Spleen (tissue), 13 donors: ENCODE measurements at regions of chr21 and their contacts with region 1.

Region 1: DNA sequence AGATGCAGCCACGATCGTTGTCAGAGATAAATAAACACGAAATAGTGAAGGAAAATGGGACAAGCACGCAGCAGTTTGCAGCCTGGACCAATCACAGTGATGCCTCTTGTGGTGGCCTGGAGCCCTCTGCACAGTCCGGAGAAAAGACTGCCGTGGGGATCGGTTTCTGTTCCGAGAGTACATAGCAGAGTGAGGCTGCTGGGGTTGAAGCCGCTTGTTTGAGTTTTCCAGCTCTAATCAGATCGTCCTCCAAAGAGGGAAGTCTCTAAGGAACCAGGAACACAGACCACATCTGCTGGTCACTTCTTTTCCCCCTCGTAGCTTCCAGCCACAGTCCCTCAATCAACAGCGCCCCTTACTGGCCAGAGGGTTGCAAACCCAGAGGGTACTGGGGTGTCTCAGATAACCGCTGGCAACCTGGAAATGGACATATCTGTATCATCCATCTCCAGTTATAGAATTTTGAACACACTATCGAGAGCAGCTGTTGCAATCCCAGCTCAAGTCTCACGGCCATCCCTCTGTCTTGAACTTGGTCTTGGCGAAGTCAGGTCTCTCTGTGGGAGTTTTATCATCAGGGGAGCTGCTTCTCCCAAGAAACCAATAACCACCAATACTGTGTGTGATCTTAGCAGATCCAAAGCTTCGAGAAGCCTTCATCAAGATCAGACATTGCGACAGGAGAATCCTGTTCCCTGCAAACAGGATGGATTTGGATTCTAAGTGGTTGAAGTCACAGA is 57.4 kb downstream of the OLIG1 start:
- DNase-seq: peak; percentile 84
- H3K4me3 ChIP-seq: peak overlapping the region in 2 of 8 donors; percentile 35 to 54
- H3K27ac ChIP-seq: no peak overlapping the region
- H3K4me1 ChIP-seq: peaks cover 0 to 13% (median 3%) of the 10 kb centered on the region in 6 donors
- H3K27me3 ChIP-seq: peaks cover 0 to 57% (median 9%) of the 10 kb centered on the region in 7 donors
- CTCF ChIP-seq: peak; percentile 28 to 82 (median 69)
- POLR2A ChIP-seq: no peak

Region 2: GRCh38 chr21:32940079-32941014 is 187.0 kb before region 1 on chr21:
- intact Hi-C with region 1: loop called (anchors 5 kb)
- DNase-seq: no peak
- H3K4me3 ChIP-seq: no peak overlapping the region
- H3K27ac ChIP-seq: no peak overlapping the region
- H3K4me1 ChIP-seq: peaks cover 0 to 11% (median 0%) of the 10 kb centered on the region in 6 donors
- H3K27me3 ChIP-seq: peaks cover 0 to 17% (median 0%) of the 10 kb centered on the region in 7 donors
- CTCF ChIP-seq: peak; percentile 38 to 88 (median 71)
- POLR2A ChIP-seq: no peak

Region 3: DNA sequence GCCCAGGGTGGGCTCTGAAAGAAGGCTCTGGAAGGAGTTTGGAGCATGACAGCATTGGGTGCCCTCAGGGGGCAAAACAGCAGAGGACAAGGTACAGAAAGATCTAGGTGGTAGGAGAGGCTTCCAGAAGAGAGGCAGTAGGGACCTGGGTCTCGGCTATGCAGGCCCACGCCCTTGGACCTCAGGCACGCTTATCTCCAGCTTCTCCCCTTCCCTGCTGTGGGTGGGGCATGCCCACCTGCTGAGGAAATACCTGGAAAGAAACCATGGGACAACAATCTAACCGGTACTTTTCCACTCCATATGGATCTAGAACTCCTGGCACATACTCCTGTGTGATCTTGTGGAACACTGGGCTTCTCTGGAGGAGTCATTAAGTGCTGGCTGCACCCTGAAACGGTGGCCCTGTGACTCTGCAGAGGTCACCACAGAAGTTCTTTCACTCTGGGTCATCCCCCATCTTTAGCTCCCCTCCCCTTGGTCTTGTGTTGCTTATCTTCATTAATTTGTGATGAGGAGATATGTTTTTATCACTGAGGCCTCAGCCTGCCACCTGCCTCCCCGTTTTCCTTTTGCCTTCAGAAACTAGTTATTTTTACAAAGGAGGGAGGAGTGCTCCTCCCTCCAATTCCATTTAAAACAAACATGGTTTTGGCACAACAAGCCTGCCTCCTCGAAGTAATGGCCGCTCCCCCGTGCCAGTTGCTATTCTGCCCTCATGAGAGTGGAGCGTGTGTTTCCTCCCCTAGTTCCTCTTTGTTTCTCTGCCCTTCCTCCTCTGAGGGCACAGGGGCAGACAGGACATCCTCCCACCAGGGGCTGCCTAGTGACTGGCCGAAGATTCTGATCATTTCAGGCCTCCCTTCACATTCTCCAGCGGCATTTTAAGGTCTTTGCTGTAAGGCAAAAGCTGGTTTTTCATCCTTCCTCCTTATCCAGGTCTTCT is 866.2 kb after region 1 on chr21:
- intact Hi-C with region 1: no loop called
- DNase-seq: no peak
- H3K4me3 ChIP-seq: no peak overlapping the region
- H3K27ac ChIP-seq: peak overlapping the region in 6 of 8 donors; percentile 22 to 47 (median 44)
- H3K4me1 ChIP-seq: peaks cover 0 to 13% (median 9%) of the 10 kb centered on the region in 6 donors
- H3K27me3 ChIP-seq: no peaks in the 10 kb centered on the region
- CTCF ChIP-seq: peak in 1 of 11 experiments; percentile 20
- POLR2A ChIP-seq: no peak